Activated B cell treated with CpG ODN at 0.5 μM for 24 hours (primary cell): ENCODE measurements at regions of chr4 and their contacts with region 1.

Region 1: GRCh38 chr4:54233277-54233696 is 4.2 kb downstream of the PDGFRA start:
- DNase-seq: peak; percentile 68
- ATAC-seq: peak; percentile 80
- H3K4me3 Mint-ChIP-seq: peak overlapping the region; percentile 82
- H3K27ac Mint-ChIP-seq: no peak overlapping the region
- H3K4me1 Mint-ChIP-seq: peaks cover 30% of the 10 kb centered on the region
- H3K27me3 Mint-ChIP-seq: peaks cover 54% of the 10 kb centered on the region
- CTCF ChIP-seq: peak; percentile 17

Region 2: GRCh38 chr4:52376132-52376704 is 1857.1 kb before region 1 on chr4:
- CTCF ChIA-PET with region 1: interaction called, 24 read pairs
- POLR2A ChIA-PET with region 1: interaction called, 4 read pairs
- intact Hi-C with region 1: loop called (anchors 1 kb)
- DNase-seq: no peak
- ATAC-seq: no peak
- H3K4me3 Mint-ChIP-seq: no peak overlapping the region
- H3K27ac Mint-ChIP-seq: no peak overlapping the region
- H3K4me1 Mint-ChIP-seq: no peaks in the 10 kb centered on the region
- H3K27me3 Mint-ChIP-seq: peaks cover 12% of the 10 kb centered on the region
- CTCF ChIP-seq: peak; percentile 45

Region 3: GRCh38 chr4:53015681-53016080 is 1217.6 kb before region 1 on chr4:
- CTCF ChIA-PET with region 1: interaction called, 8 read pairs
- POLR2A ChIA-PET with region 1: no interaction called
- intact Hi-C with region 1: loop called (anchors 5 kb)
- DNase-seq: no peak
- ATAC-seq: no peak
- H3K4me3 Mint-ChIP-seq: no peak overlapping the region
- H3K27ac Mint-ChIP-seq: no peak overlapping the region
- H3K4me1 Mint-ChIP-seq: peaks cover 12% of the 10 kb centered on the region
- H3K27me3 Mint-ChIP-seq: no peaks in the 10 kb centered on the region
- CTCF ChIP-seq: no peak

Region 4: GRCh38 chr4:53490965-53491622 is 742.2 kb before region 1 on chr4:
- CTCF ChIA-PET with region 1: interaction called, 5 read pairs
- POLR2A ChIA-PET with region 1: no interaction called
- intact Hi-C with region 1: loop called (anchors 1 kb)
- DNase-seq: no peak
- ATAC-seq: no peak
- H3K4me3 Mint-ChIP-seq: no peak overlapping the region
- H3K27ac Mint-ChIP-seq: no peak overlapping the region
- H3K4me1 Mint-ChIP-seq: no peaks in the 10 kb centered on the region
- H3K27me3 Mint-ChIP-seq: peaks cover 7% of the 10 kb centered on the region
- CTCF ChIP-seq: no peak

Region 5: DNA sequence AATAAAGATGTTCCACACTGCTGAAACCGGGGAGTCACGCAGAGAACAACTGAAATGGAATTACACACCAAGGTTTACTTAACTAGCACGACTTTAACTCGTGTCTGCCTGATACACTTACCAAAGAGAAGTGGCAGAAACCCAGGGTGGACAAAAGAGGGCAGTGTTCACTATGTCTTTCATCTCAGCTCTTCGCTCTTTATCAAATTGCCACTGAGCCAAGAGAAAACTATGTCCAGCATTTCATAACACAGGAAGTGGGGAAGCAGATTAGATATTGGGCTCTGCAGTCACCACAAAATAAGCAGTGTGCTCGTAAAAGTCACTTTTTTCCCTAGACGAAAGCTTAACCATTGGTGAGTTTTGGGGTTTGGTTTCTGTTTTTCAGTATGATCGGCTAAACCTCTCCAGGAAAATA is 324.6 kb before region 1 on chr4:
- CTCF ChIA-PET with region 1: interaction called, 60 read pairs
- POLR2A ChIA-PET with region 1: no interaction called
- intact Hi-C with region 1: loop called (anchors 1 kb)
- DNase-seq: no peak
- ATAC-seq: no peak
- H3K4me3 Mint-ChIP-seq: no peak overlapping the region
- H3K27ac Mint-ChIP-seq: no peak overlapping the region
- H3K4me1 Mint-ChIP-seq: peaks cover 13% of the 10 kb centered on the region
- H3K27me3 Mint-ChIP-seq: peaks cover 32% of the 10 kb centered on the region
- CTCF ChIP-seq: peak; percentile 36

Region 6: DNA sequence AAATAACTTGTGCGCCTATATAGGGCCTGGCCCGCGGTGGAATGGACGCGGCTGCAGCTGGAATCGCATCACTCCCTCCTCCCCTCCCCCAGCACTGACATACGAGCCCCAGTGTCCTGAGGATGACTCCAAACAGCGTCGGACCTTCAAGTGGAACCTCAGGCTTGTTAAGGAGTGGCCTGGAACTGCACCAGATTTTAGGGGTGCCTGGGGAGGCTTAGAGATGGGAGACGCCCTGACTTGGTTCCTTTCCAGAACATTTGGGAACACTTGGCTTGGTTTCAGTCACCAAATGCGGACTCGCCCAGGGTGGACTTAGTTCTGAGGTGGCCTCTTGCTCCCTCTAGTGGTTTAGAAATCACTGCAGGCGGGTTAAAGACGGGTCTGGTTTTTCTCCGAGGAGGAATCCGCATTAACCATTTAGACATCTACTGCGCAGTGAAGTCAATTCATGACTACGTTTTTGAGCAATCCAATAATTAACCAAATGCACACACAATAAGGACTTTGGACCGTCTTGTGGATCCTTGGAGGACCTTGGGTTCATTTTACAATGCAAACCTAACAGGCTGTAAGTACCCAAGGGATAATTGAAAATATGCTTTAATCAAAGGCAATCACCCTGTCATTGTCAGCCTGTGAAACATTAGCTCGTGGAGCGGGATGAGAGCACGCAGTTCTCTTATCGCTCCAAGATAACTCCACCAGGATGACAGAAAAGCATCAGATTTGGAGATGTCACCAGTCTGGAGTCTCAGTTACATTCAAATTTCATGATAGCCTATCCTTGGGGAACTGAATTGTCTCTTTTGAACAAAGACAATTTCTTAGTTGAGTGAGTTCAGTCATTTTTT is 15.4 kb before region 1 on chr4:
- CTCF ChIA-PET with region 1: interaction called, 13 read pairs
- POLR2A ChIA-PET with region 1: no interaction called
- intact Hi-C with region 1: loop called (anchors 1 kb)
- DNase-seq: peak; percentile 27
- ATAC-seq: peak; percentile 66
- H3K4me3 Mint-ChIP-seq: peak overlapping the region; percentile 16
- H3K27ac Mint-ChIP-seq: no peak overlapping the region
- H3K4me1 Mint-ChIP-seq: peaks cover 4% of the 10 kb centered on the region
- H3K27me3 Mint-ChIP-seq: peaks cover 23% of the 10 kb centered on the region
- CTCF ChIP-seq: no peak

Region 7: DNA sequence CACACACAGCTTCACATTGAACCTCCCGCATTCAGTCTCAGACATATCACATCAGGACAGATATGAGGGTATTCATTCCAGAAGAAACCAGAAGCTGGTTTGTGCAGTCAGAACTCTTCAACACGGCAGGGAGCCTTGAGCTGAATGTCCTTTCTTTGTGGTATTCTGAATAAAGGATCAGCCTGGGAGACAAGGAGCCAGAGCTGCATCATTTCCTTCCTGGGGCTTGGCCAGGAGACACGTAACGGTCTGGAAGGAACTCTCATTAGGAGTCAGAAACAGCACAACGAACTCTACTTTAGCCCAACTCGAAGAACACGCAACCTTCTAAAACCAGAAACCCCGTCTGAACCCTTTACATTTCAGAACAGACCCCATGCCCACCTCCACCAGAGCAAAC is 845.7 kb after region 1 on chr4:
- CTCF ChIA-PET with region 1: no interaction called
- POLR2A ChIA-PET with region 1: no interaction called
- intact Hi-C with region 1: no loop called
- DNase-seq: no peak
- ATAC-seq: no peak
- H3K4me3 Mint-ChIP-seq: no peak overlapping the region
- H3K27ac Mint-ChIP-seq: no peak overlapping the region
- H3K4me1 Mint-ChIP-seq: no peaks in the 10 kb centered on the region
- H3K27me3 Mint-ChIP-seq: no peaks in the 10 kb centered on the region
- CTCF ChIP-seq: no peak